Heart right ventricle (tissue), 16 donors: ENCODE measurements at regions of chr10 and their contacts with region 1.

Region 1: GRCh38 chr10:35781643-35782035 is 139.5 kb upstream of the FZD8 start:
- DNase-seq: no peak
- ATAC-seq: no peak
- H3K4me3 ChIP-seq: no peak overlapping the region
- H3K27ac ChIP-seq: no peak overlapping the region
- H3K4me1 ChIP-seq: peaks cover 0 to 12% (median 0%) of the 10 kb centered on the region in 9 donors
- H3K27me3 ChIP-seq: no peaks in the 10 kb centered on the region
- CTCF ChIP-seq: peak in 5 of 9 donors; percentile 14 to 38 (median 18)

Region 2: DNA sequence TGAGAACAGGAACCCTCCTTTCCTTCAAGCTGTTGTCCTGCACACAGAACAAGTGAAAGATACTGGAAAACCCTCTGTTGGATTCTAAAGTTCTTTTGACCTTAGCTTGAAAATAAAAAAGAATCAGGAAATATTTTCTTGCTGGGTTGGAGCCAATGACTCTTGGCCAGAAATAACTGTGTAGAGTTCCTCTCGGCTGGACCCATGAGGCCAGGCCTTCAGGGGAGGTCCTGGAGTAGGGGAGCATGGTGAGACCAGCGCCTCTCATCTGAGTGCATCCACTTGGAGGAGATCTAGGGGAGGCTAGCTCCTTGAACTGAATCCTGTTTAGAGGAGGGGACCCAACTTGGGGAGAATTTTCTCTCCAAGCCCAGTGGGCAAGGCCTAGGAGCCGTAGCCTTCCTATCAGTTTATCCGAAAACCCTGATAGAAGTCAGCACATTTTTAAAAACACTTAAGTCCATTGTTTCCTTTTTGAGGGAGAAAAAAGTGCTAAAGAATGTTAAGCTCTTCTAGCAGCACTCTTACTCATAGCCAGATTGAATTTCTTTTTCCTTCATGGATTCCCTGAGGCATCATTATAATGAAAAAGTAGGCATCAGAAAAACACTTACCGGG is 708.1 kb after region 1 on chr10:
- intact Hi-C with region 1: loop called in 1 of 10 experiments (anchors 10 kb)
- DNase-seq: peak; percentile 25 to 46
- ATAC-seq: peak; percentile 72 to 91 (median 83)
- H3K4me3 ChIP-seq: no peak overlapping the region
- H3K27ac ChIP-seq: peak overlapping the region in 9 of 10 donors; percentile 21 to 86 (median 54)
- H3K4me1 ChIP-seq: peaks cover 0 to 45% (median 25%) of the 10 kb centered on the region in 9 donors
- H3K27me3 ChIP-seq: no peaks in the 10 kb centered on the region
- CTCF ChIP-seq: no peak